ENCODE measurements at regions of chr1 and their contacts with region 1.

Region 1: GRCh38 chr1:184982002-184982954 is 8.0 kb upstream of the NIBAN1 start:
- DNase-seq: peak; percentile 82
- H3K4me3 Mint-ChIP-seq: no peak overlapping the region
- H3K27ac Mint-ChIP-seq: no peak overlapping the region
- H3K4me1 Mint-ChIP-seq: no peaks in the 10 kb centered on the region
- H3K27me3 Mint-ChIP-seq: peaks cover 82% of the 10 kb centered on the region
- CTCF ChIP-seq: peak; percentile 97

Region 2: GRCh38 chr1:184075055-184076029 is 906.9 kb before region 1 on chr1:
- CTCF ChIA-PET with region 1: no interaction called
- POLR2A ChIA-PET with region 1: no interaction called
- intact Hi-C with region 1: loop called (anchors 2 kb)
- DNase-seq: peak; percentile 72
- H3K4me3 Mint-ChIP-seq: no peak overlapping the region
- H3K27ac Mint-ChIP-seq: no peak overlapping the region
- H3K4me1 Mint-ChIP-seq: no peaks in the 10 kb centered on the region
- H3K27me3 Mint-ChIP-seq: no peaks in the 10 kb centered on the region
- CTCF ChIP-seq: peak; percentile 90

Region 3: DNA sequence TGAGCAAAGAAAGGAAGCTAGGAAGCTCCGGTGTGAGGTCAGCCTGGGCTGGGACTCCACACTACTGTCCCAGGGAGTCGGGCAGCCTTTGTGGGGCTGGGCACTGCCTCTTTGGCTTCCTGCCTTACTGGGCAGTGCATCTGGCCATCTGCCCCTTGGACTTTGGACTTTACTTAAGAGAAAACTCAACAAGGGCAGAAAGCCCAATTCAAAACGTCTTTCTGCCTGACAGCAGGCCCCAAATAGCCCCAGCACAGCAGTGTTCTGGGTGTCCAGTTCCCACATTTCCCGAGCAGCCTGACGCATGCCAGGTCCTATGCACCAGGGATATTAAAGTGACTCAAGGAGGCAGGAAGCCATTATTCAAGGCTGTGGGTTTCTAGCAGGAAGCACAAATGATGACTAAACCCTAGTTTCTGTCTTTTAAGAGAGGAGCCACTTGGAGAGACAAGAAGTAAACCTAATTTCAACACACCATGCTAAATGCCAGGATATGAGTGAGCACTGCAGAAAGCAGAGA is 189.8 kb before region 1 on chr1:
- CTCF ChIA-PET with region 1: interaction called, 64 read pairs
- POLR2A ChIA-PET with region 1: no interaction called
- intact Hi-C with region 1: no loop called
- DNase-seq: peak; percentile 99
- H3K4me3 Mint-ChIP-seq: no peak overlapping the region
- H3K27ac Mint-ChIP-seq: peak overlapping the region; percentile 73
- H3K4me1 Mint-ChIP-seq: peaks cover 17% of the 10 kb centered on the region
- H3K27me3 Mint-ChIP-seq: no peaks in the 10 kb centered on the region
- CTCF ChIP-seq: no peak

Region 4: DNA sequence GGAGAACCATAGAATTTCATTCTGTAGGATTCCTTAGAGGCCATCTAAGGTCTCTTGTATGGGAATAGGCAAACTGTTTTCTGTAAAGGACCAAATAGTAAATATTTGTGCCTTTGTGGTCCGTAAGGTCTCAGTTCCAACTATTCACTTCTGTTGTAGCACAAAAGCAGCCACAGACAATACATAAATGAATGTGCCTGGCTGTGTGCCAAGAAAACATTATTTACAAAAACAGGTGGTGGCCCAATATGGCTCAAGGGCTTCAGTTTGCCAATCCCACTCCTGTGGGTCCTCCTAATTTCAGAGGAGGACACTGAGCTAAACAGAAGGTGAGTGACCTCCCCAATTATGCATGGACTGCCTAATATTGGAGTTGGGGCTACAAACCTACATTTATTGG is 160.0 kb before region 1 on chr1:
- CTCF ChIA-PET with region 1: interaction called, 11 read pairs
- POLR2A ChIA-PET with region 1: interaction called, 3 read pairs
- intact Hi-C with region 1: no loop called
- DNase-seq: peak; percentile 16
- H3K4me3 Mint-ChIP-seq: no peak overlapping the region
- H3K27ac Mint-ChIP-seq: no peak overlapping the region
- H3K4me1 Mint-ChIP-seq: no peaks in the 10 kb centered on the region
- H3K27me3 Mint-ChIP-seq: peaks cover 86% of the 10 kb centered on the region
- CTCF ChIP-seq: no peak

Region 5: DNA sequence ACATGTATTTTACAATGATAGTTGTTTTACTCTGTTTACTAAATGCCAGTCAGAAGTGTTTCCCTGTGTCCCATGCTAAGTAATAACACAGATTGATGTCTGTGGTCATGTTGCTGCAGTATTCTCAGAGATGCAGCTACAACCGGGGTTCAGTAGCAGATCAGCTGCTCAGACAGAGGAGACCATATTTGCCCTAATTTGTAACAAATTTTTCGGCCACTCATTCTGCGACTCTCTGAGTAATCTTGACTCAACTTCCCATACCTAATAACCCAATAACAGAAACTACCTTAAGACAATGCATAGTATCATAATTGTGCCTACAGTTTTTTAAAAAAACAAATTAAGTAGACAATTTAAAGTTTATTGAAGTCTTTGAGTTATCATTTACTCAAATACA is 40.5 kb before region 1 on chr1:
- CTCF ChIA-PET with region 1: interaction called, 10 read pairs
- POLR2A ChIA-PET with region 1: no interaction called
- intact Hi-C with region 1: no loop called
- DNase-seq: no peak
- H3K4me3 Mint-ChIP-seq: no peak overlapping the region
- H3K27ac Mint-ChIP-seq: no peak overlapping the region
- H3K4me1 Mint-ChIP-seq: no peaks in the 10 kb centered on the region
- H3K27me3 Mint-ChIP-seq: peaks cover 82% of the 10 kb centered on the region
- CTCF ChIP-seq: no peak

Region 6: DNA sequence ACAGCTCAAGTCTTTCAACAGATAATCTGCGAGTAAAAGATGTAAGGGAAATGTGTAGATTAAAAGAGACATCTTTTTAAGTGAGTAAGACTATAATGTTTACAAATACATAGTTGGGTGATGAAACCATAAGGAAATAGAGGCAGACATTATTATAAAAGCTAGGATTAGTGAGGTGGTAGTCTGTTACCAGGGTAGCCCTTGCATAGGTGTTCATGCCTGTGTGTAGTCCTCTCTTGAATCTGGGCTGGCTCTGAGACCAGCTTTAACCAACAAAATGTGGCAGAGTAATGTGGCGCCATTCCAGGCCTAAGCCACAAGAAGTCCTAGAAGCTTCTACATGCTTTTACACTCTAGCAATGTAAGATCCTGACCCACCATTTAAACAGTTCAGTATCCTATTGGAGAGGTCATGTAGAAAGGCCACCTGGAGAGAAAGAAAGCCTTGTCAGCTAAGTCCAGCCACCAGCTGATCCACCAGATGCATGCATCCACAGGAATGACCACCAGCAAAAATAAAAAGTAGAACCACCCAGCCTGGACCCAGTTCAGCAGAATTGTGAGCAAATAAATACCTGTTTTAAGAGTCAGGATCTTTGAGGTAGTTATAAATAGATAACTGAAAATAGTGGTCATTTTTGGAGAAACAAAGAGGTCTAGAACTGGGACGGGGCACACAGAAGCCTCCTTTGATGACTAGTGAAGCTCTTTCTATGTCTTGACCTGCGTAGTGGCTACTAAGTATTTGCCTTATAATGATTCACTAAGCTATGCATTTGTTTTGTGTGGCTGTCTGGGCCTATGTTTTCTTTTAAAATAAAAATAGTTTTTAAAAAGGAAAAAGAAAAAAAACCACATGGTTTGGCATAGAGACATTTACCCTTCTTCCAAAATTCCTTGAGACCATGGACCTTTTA is 16.1 kb before region 1 on chr1:
- CTCF ChIA-PET with region 1: interaction called, 34 read pairs
- POLR2A ChIA-PET with region 1: no interaction called
- intact Hi-C with region 1: no loop called
- DNase-seq: no peak
- H3K4me3 Mint-ChIP-seq: no peak overlapping the region
- H3K27ac Mint-ChIP-seq: no peak overlapping the region
- H3K4me1 Mint-ChIP-seq: peaks cover 6% of the 10 kb centered on the region
- H3K27me3 Mint-ChIP-seq: peaks cover 71% of the 10 kb centered on the region
- CTCF ChIP-seq: no peak

Region 7: DNA sequence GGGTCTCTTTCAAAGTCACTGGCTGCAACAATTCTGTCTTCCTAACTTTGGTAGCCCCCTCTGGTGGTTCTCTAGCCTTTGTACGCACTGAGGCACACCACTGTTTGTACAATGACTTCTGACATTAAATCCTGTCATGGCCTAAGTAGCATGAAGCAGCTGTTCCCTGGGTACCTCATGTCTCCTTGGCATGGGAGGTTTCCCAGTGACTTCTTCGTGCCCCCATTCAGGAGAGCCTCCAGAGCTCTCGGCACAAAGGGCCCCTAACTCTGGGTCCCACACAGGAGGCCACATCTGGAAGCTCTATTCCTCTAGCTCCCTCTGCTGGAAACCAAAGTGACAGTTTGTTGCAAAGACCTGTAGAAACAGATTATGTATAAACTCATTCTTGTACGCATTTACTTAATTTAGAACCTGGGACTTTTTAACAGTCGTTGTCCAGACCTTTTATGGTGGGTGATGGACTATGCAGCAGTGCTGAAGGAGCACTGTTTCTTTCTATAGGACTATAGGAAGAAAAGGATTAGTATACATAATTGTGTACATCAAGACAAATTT is 188.1 kb after region 1 on chr1:
- CTCF ChIA-PET with region 1: interaction called, 19 read pairs
- POLR2A ChIA-PET with region 1: no interaction called
- intact Hi-C with region 1: loop called (anchors 1 kb)
- DNase-seq: peak; percentile 84
- H3K4me3 Mint-ChIP-seq: no peak overlapping the region
- H3K27ac Mint-ChIP-seq: no peak overlapping the region
- H3K4me1 Mint-ChIP-seq: no peaks in the 10 kb centered on the region
- H3K27me3 Mint-ChIP-seq: no peaks in the 10 kb centered on the region
- CTCF ChIP-seq: peak; percentile 80

Region 8: GRCh38 chr1:185224132-185224531 is 241.9 kb after region 1 on chr1:
- CTCF ChIA-PET with region 1: no interaction called
- POLR2A ChIA-PET with region 1: no interaction called
- intact Hi-C with region 1: no loop called
- DNase-seq: no peak
- H3K4me3 Mint-ChIP-seq: no peak overlapping the region
- H3K27ac Mint-ChIP-seq: no peak overlapping the region
- H3K4me1 Mint-ChIP-seq: no peaks in the 10 kb centered on the region
- H3K27me3 Mint-ChIP-seq: no peaks in the 10 kb centered on the region
- CTCF ChIP-seq: no peak

Measured in MCF 10A (cell line).